ENCODE measurements at regions of chr2 and their contacts with region 1.

Region 1: DNA sequence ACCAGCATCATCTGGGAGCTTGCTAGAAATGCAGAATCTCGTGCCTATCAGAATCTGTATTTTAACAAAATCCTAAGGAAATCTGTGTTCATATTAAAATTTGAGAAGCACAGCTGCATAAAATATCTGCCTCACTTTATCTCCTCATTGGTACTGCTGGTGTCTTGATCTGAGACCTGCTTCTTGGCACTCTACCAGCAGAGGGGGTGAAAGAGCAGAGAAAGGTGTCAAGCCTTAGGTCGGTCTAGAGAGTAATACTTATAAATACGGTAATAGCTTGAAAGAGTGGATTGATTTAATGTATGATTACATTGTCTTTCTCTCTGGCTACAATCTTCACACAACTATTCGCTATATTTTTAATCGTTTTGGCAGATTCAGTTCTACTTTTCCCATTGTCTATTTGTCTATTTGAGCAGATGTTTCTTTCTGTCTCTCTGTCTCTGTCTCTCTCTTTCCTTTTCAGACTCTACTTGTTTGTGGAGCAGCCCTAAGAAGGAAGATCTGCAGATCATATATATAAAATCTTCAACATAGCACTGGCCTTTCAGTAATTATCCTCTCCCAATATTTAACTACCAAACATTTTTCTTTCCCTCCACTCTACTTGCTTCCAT is 1.7 kb upstream of the GCG start:
- DNase-seq: no peak
- H3K4me3 ChIP-seq: no peak overlapping the region
- H3K27ac ChIP-seq: no peak overlapping the region
- H3K4me1 ChIP-seq: no peaks in the 10 kb centered on the region
- H3K27me3 ChIP-seq: no peaks in the 10 kb centered on the region
- CTCF ChIP-seq: peak in 1 of 3 experiments; percentile 11
- POLR2A ChIP-seq: no peak

Region 2: DNA sequence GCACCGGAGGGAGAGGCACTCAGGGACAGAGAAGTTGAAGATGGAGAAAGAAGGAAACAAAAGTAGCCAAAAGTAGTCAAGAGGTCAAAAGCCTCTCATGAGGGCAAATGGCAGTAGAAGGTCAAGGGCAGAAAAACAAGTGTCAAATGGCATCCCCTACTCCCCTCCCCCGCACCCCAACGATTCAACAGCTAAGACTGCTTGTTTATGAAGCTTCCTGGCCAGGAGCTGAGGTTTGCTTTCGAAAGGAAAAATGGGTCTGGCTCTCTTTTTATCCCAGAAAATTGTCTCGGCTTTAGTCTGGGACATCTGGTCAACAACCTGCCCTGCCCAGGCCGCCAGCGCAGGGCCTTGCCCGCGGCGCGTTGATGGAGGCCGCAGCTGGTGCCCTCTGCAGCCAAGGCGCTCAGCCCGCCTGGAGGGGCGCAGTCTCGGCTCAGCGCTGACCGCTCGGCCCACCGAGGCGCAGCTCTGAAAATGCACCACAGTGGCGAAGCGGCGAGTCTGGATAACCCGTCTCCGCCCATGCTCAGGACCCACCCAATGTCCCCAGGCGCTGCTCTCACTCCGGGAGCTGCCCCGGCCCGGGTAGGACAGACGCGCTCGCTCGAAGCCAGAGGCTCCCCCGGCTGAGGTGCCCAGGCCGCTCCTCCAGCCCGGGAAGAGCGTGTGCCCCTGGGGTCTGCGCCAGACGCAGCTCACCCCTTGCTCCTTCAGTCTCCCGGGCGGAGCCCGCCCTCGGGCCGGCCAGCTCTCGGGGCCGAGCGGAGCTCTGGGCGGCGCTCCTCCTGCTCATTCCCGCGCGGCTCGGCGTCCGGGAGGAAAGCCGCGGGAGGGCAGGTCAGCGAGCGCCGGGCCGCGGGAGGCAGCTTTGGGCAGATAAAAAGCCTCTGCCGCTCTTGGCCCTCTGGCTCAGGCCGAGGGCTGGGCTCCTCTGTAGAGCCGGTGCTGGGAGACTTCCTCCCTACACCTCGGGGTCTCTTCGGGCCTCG is 739.4 kb before region 1 on chr2:
- intact Hi-C with region 1: no loop called
- DNase-seq: no peak
- H3K4me3 ChIP-seq: peak overlapping the region; percentile 31 to 43
- H3K27ac ChIP-seq: no peak overlapping the region
- H3K4me1 ChIP-seq: peaks cover 46% of the 10 kb centered on the region
- H3K27me3 ChIP-seq: peaks cover 7% of the 10 kb centered on the region
- CTCF ChIP-seq: no peak
- POLR2A ChIP-seq: no peak

Region 3: GRCh38 chr2:162166174-162166573 is 12.5 kb after region 1 on chr2:
- intact Hi-C with region 1: loop called (anchors 1 kb)
- DNase-seq: no peak
- H3K4me3 ChIP-seq: no peak overlapping the region
- H3K27ac ChIP-seq: no peak overlapping the region
- H3K4me1 ChIP-seq: no peaks in the 10 kb centered on the region
- H3K27me3 ChIP-seq: no peaks in the 10 kb centered on the region
- CTCF ChIP-seq: no peak
- POLR2A ChIP-seq: no peak

Measured in vagina (tissue), 2 donors.